Endothelial cell of umbilical vein (primary cell): ENCODE measurements at regions of chr18 and their contacts with region 1.

Region 1: GRCh38 chr18:63963615-63964256 is 6.1 kb upstream of the SERPINB8 start:
- DNase-seq: peak; percentile 57
- H3K4me3 ChIP-seq: no peak overlapping the region
- H3K27ac ChIP-seq: no peak overlapping the region
- H3K4me1 ChIP-seq: no peaks in the 10 kb centered on the region
- H3K27me3 ChIP-seq: peaks cover 14 to 28% of the 10 kb centered on the region in 2 experiments
- CTCF ChIP-seq: peak; percentile 68 to 82
- POLR2A ChIP-seq: no peak

Region 2: GRCh38 chr18:63511286-63511685 is 452.4 kb before region 1 on chr18:
- CTCF ChIA-PET with region 1: interaction called, 11 read pairs
- POLR2A ChIA-PET with region 1: no interaction called
- dilution Hi-C with region 1: no loop called
- intact Hi-C with region 1: no loop called
- DNase-seq: peak; percentile 33
- H3K4me3 ChIP-seq: no peak overlapping the region
- H3K27ac ChIP-seq: no peak overlapping the region
- H3K4me1 ChIP-seq: no peaks in the 10 kb centered on the region
- H3K27me3 ChIP-seq: peaks cover 5 to 11% of the 10 kb centered on the region in 2 experiments
- CTCF ChIP-seq: peak; percentile 52 to 56
- POLR2A ChIP-seq: no peak

Region 3: DNA sequence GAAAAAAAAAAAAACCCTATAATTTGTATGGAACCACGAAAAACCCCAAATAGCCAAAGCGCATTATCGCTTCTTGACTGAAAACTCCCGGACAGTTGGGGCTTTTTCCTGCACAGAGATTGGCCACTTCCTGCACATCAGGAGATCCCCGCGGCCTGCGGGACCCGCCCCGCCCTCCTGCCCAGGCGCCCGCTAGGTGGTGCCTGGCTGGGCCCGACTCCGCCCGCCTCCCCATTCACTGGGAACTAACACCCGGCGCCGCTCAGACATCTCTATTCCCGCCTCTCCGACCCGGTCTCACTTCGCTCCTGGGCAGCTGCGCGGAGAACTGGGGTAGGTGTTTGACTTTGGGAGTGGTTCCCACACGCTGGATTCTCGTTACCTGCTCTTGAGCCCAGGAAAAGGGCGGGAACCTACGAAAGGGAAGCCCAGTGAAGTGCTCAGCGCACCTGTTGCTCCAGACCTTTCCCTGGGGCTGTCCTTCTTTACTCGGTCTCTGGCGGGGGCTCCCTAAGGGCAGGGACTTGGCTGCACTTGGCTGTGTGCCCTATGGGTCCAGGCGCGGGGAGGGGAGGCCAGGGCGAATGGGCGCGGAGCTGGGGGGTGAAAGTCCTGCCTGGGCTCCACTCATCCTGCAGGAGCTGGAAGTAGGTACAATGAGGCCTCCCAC is 14.5 kb before region 1 on chr18 and contains the start of gene HMSD:
- CTCF ChIA-PET with region 1: interaction called, 21 read pairs
- POLR2A ChIA-PET with region 1: no interaction called
- dilution Hi-C with region 1: no loop called
- intact Hi-C with region 1: no loop called
- DNase-seq: peak; percentile 17
- H3K4me3 ChIP-seq: peak within 1 kb of the TSS in 2 of 3 experiments; percentile 2 to 23
- H3K27ac ChIP-seq: no peak within 1 kb of the TSS
- H3K4me1 ChIP-seq: peaks cover 5% of the 10 kb centered on the region
- H3K27me3 ChIP-seq: peaks cover 0 to 7% of the 10 kb centered on the region in 2 experiments
- CTCF ChIP-seq: peak; percentile 37 to 59
- POLR2A ChIP-seq: no peak
- total RNA-seq, gene HMSD: not detected in 2 replicates

Region 4: GRCh38 chr18:63979409-63979920 is 15.7 kb after region 1 on chr18:
- CTCF ChIA-PET with region 1: interaction called, 61 read pairs
- POLR2A ChIA-PET with region 1: no interaction called
- dilution Hi-C with region 1: no loop called
- intact Hi-C with region 1: loop called (anchors 1 kb)
- DNase-seq: peak; percentile 73
- H3K4me3 ChIP-seq: no peak overlapping the region
- H3K27ac ChIP-seq: no peak overlapping the region
- H3K4me1 ChIP-seq: peaks cover 2% of the 10 kb centered on the region
- H3K27me3 ChIP-seq: no peaks in the 10 kb centered on the region
- CTCF ChIP-seq: peak; percentile 83 to 84
- POLR2A ChIP-seq: no peak

Region 5: GRCh38 chr18:63986885-63987284 is 23.1 kb after region 1 on chr18:
- CTCF ChIA-PET with region 1: interaction called, 15 read pairs
- POLR2A ChIA-PET with region 1: no interaction called
- dilution Hi-C with region 1: no loop called
- intact Hi-C with region 1: no loop called
- DNase-seq: no peak
- H3K4me3 ChIP-seq: no peak overlapping the region
- H3K27ac ChIP-seq: no peak overlapping the region
- H3K4me1 ChIP-seq: no peaks in the 10 kb centered on the region
- H3K27me3 ChIP-seq: no peaks in the 10 kb centered on the region
- CTCF ChIP-seq: no peak
- POLR2A ChIP-seq: no peak

Region 6: DNA sequence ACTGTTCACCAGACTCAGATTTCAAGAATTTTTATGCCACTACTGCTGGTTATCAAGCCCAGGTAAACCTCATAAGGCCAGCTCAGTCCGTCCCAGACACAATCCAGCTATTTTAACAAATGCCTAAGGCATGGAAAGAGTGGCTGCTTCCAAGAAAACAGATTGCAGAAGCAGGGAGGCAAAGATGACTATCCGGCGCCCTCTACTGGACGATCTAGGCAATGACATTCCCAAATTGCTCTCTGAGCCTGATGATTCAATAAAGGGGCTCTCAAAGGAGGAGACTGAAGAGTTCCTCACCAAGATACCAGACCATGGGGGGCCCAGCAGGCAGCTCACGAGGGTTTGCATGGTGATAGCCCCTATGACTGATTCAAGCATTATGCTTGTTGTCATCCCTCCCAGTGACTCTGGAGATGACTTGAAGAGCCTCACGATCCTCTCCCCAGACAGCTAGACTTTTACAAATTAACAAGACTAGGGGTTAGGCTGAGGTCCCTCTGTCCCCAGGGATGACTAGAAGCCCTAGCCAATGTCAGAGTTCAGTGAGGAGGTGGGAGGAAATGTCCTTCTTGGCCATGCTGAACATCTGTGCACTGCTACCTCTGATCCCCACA is 31.2 kb after region 1 on chr18:
- CTCF ChIA-PET with region 1: interaction called, 33 read pairs
- POLR2A ChIA-PET with region 1: no interaction called
- dilution Hi-C with region 1: no loop called
- intact Hi-C with region 1: loop called (anchors 2 kb)
- DNase-seq: peak; percentile 51
- H3K4me3 ChIP-seq: no peak overlapping the region
- H3K27ac ChIP-seq: no peak overlapping the region
- H3K4me1 ChIP-seq: no peaks in the 10 kb centered on the region
- H3K27me3 ChIP-seq: no peaks in the 10 kb centered on the region
- CTCF ChIP-seq: peak; percentile 83 to 90
- POLR2A ChIP-seq: no peak

Region 7: DNA sequence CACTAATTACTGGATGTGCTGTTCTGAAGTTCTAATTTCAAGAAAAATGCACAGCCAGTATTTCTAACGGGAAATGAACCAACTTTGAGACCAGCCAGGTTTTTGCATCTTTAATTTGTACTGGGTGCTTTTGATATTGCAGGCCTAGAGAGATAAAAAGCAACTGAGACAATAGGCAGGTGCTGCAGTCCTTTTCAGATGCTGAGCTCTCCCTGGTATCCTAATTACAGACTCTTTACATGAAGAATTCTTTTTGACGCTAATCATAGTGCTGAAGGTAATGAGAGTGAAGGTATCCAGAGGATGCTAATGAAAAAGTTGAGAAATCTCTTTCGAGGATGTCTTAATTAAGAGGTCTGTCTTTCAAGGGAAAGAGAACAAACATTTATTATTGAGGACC is 91.3 kb after region 1 on chr18:
- CTCF ChIA-PET with region 1: no interaction called
- POLR2A ChIA-PET with region 1: no interaction called
- dilution Hi-C with region 1: no loop called
- intact Hi-C with region 1: no loop called
- DNase-seq: no peak
- H3K4me3 ChIP-seq: no peak overlapping the region
- H3K27ac ChIP-seq: no peak overlapping the region
- H3K4me1 ChIP-seq: no peaks in the 10 kb centered on the region
- H3K27me3 ChIP-seq: no peaks in the 10 kb centered on the region
- CTCF ChIP-seq: no peak
- POLR2A ChIP-seq: no peak

Region 8: DNA sequence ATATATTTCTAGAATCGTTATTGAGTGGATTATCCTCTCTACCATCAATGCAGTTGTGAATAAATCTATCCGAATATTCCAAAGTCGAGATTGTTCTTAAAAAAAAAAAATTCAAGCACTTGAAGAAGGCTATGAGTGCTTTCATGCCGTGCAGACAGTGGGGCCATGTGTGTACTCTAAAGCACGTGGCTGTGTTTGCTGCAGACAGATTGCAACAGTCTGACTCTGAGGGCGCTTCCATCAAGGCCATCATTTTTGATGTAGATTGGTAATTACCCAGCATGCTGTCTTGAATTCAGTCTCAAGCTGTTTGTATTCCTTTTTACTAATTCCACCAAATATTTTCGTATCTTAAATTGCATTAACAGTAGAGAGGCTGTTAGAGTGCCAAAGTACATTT is 511.0 kb after region 1 on chr18:
- CTCF ChIA-PET with region 1: no interaction called
- POLR2A ChIA-PET with region 1: no interaction called
- dilution Hi-C with region 1: no loop called
- intact Hi-C with region 1: no loop called
- DNase-seq: no peak
- H3K4me3 ChIP-seq: no peak overlapping the region
- H3K27ac ChIP-seq: no peak overlapping the region
- H3K4me1 ChIP-seq: no peaks in the 10 kb centered on the region
- H3K27me3 ChIP-seq: no peaks in the 10 kb centered on the region
- CTCF ChIP-seq: no peak
- POLR2A ChIP-seq: no peak